Ascending aorta (tissue), 2 donors: ENCODE measurements at regions of chr12 and their contacts with region 1.

Region 1: GRCh38 chr12:6607751-6608591 is 792 bp upstream of the CHD4 start:
- DNase-seq: peak in 1 of 2 donors; percentile 86
- H3K4me3 ChIP-seq: no peak overlapping the region
- H3K27ac ChIP-seq: peak overlapping the region; percentile 73 to 99
- H3K4me1 ChIP-seq: peaks cover 26 to 34% of the 10 kb centered on the region in 2 donors
- H3K27me3 ChIP-seq: no peaks in the 10 kb centered on the region
- CTCF ChIP-seq: no peak

Region 2: DNA sequence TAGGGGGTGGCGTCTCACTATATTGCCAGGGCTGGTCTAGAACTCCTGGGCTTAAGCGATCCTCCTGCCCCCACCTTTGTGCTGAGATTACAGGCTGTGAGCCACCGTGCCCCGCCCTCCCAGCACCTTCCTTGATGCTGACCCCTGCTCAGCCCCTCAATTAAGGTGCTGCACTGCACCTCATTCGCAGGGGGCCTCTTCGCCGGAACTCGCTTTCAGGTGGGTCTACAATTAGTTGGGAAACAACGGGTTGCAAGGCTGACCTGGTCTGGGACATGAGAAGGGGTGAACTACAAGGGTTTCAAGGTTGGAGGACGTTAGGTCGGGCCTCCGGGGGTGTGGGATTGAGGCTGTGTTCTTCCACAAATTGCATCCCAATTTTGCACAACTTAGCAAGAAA is 38.7 kb before region 1 on chr12:
- intact Hi-C with region 1: loop called (anchors 2 kb)
- DNase-seq: no peak
- H3K4me3 ChIP-seq: no peak overlapping the region
- H3K27ac ChIP-seq: peak overlapping the region in 1 of 2 donors; percentile 93
- H3K4me1 ChIP-seq: peaks cover 8 to 12% of the 10 kb centered on the region in 2 donors
- H3K27me3 ChIP-seq: no peaks in the 10 kb centered on the region
- CTCF ChIP-seq: no peak

Region 3: DNA sequence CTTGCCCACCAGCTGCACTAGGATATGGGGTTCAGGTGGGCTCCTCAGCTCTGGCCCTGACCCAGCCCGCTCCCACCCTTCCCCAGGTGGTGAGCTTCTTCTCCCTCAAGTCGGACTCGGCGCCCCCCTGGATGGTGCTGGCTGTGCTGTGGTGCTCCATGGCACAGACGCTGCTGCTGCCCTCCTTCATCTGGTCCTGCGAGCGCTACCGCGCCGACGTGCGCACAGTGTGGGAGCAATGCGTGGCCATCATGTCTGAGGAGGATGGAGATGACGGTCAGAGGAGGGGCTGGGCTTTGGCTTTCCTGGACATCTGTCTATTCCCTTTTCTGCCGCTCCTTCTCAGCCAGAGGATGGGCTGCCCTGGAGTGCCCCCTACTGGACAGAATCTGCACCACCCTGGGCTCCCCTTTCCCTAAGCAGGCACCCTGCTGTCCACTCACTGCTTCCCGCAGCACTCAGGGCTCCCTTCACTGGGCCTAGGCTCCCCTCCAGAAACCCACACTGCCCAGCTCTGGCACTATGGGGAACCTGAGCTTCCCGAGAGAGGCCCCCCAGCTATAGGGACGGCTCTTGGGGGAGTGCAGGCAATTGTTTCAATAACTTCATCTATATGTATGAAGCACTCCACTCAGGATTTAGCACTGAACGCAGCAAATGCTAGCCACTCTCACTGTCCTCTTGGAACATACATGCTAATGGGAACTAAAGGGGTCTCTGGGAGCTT is 217.6 kb after region 1 on chr12:
- intact Hi-C with region 1: loop called (anchors 5 kb)
- DNase-seq: peak; percentile 53 to 93
- H3K4me3 ChIP-seq: peak overlapping the region in 1 of 2 donors; percentile 46
- H3K27ac ChIP-seq: no peak overlapping the region
- H3K4me1 ChIP-seq: peaks cover 3 to 23% of the 10 kb centered on the region in 2 donors
- H3K27me3 ChIP-seq: peaks cover 7% of the 10 kb centered on the region
- CTCF ChIP-seq: peak; percentile 90 to 93 (median 91)

Region 4: DNA sequence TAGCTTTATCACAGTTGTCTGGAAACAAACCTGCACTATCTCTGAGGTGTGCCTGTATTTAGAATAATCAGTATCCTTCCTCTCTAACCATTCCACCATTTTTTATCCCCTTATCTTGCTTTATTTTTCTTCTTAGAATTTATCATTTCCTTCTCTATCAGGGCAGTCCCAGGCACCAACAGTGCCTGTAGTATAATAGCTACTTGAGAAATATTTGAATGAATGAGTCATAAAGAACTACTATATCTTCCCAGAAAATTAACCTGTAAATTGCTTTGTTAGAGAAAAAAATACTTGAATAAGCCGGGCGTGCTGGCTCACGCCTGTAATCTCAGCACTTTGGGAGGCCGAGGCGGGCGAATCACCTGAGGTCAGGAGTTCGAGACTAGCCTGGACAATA is 1403.4 kb after region 1 on chr12:
- intact Hi-C with region 1: no loop called
- DNase-seq: no peak
- H3K4me3 ChIP-seq: no peak overlapping the region
- H3K27ac ChIP-seq: no peak overlapping the region
- H3K4me1 ChIP-seq: no peaks in the 10 kb centered on the region
- H3K27me3 ChIP-seq: no peaks in the 10 kb centered on the region
- CTCF ChIP-seq: no peak